Sigmoid colon (tissue), 7 donors: ENCODE measurements at regions of chr6 and their contacts with region 1.

Region 1: DNA sequence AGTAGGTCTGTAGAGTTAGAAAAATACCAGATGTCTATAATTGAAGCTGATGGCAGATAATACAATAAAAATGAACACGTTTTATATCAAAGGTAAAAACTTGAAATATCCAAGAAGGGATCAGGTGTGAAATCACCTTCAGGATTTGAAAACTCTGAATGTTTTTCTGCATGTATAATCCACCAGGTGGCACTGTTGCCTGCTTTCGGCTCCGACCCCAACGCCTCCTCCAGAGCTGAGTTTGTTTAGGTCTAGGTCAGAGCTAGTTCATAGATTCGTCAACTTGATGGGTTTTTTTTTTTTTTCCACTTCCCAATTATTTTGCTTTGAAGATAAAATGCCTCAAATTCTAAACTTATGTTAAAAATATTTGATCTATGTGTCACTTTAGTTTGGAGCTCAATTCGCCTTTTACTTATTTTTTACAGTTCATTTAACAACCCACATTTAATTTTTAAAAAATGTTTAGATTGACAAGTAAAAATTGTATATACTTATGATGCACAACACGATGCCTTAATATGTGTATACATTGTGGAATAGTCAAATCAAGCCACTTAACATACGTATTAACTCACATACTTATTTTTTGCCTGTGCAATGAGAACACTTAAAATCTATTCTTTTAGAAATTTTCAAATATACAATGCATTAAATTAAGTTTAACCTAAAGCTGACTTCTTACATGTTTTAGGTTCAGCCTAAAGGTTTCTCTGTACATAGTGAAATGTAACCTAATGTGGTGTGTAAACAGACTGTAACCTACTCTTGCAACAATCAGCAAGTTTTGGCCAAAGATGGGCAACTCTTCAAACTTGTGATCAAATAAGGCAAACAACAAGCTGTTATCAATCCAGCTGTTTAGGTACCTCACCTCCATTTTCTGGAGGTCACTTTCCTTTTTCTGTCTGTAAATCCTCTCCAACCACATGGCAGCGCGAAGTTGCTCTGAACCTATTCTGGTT is 39.4 kb upstream of the ENPP4 start:
- DNase-seq: peak; percentile 76
- H3K4me3 ChIP-seq: no peak overlapping the region
- H3K27ac ChIP-seq: no peak overlapping the region
- H3K4me1 ChIP-seq: no peaks in the 10 kb centered on the region
- H3K27me3 ChIP-seq: peaks cover 0 to 3% (median 0%) of the 10 kb centered on the region in 3 donors
- CTCF ChIP-seq: peak; percentile 11 to 75 (median 60)
- EP300 ChIP-seq: no peak
- POLR2A ChIP-seq: no peak

Region 2: DNA sequence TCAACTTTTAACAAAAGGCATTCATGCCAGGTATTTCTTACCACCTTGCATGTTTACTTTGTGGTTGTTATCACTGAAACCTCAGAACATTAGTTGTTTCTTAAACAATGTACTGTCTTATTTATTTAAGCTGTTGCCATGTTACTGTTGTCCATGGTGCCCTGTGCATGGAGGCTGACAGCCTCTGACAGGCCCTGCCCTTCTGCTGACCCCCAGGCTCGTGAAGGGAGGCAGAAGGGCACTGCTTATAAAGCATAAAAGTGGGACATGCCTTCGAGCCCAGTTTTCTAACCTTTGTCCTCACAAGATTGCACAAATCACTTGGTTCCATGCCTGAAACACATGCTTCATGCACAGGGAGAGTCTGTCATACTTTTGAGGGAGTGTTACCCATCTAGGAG is 28.1 kb before region 1 on chr6:
- intact Hi-C with region 1: no loop called
- DNase-seq: no peak
- H3K4me3 ChIP-seq: no peak overlapping the region
- H3K27ac ChIP-seq: no peak overlapping the region
- H3K4me1 ChIP-seq: no peaks in the 10 kb centered on the region
- H3K27me3 ChIP-seq: no peaks in the 10 kb centered on the region
- CTCF ChIP-seq: no peak
- EP300 ChIP-seq: no peak
- POLR2A ChIP-seq: no peak

Region 3: DNA sequence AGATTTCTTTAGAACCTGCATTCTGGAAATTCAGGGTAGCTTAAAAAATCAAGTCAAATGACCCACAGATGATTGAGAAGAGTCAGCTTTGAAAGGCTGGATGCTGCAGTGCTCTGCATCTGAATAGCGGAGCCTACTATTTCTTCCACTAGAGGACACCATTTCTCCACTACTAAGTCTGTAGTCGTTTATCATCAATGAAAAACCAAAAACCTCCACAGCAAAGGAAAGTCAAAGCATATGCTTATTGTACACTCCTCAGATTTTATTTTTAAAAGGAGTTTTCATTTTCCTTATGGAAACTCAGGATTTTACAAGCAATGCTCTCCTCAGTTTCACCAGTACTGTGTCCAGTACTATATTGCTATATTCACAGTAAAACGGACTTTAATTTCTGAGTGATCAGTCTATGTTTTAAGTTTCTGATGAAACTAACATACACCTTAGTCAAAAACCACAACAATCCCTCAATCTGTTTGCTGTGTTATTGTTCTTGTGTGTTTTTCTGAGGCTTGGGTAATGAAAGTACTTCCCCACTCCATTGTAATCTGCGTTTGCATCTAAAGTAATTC is 130.9 kb after region 1 on chr6:
- intact Hi-C with region 1: loop called (anchors 5 kb)
- DNase-seq: no peak
- H3K4me3 ChIP-seq: no peak overlapping the region
- H3K27ac ChIP-seq: no peak overlapping the region
- H3K4me1 ChIP-seq: no peaks in the 10 kb centered on the region
- H3K27me3 ChIP-seq: no peaks in the 10 kb centered on the region
- CTCF ChIP-seq: peak; percentile 41 to 74 (median 70)
- EP300 ChIP-seq: no peak
- POLR2A ChIP-seq: no peak

Region 4: DNA sequence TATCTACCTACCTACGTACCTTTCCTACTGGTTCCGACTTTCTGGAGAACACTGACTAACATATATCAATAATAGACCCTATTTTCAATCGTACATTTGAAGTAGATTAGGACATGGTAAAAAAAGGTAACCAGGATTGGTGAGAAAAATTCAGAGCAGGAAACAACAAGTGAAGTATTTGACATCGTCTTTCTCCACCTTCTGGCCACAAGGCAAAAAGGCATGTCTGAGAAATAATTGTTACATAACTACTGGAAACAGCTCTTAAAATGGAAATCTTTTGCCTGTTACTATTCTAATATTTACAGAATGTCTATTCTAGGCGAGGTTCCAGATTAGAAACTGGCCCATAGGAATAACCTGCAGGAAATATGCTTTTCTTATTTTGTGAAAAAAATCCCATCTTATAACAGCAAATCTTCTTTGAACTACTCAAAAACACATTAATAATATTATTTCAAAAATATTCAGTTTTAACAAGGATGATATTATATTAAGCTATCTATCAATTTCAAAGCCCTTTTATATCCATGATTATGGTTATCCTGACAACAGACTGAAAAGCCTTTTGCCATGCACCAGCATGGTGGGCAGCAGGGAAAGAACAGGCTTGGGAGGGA is 320.0 kb after region 1 on chr6:
- intact Hi-C with region 1: loop called (anchors 2 kb)
- DNase-seq: no peak
- H3K4me3 ChIP-seq: no peak overlapping the region
- H3K27ac ChIP-seq: no peak overlapping the region
- H3K4me1 ChIP-seq: peaks cover 0 to 16% (median 8%) of the 10 kb centered on the region in 4 donors
- H3K27me3 ChIP-seq: no peaks in the 10 kb centered on the region
- CTCF ChIP-seq: peak; percentile 46 to 88 (median 68)
- EP300 ChIP-seq: no peak
- POLR2A ChIP-seq: no peak

Region 5: DNA sequence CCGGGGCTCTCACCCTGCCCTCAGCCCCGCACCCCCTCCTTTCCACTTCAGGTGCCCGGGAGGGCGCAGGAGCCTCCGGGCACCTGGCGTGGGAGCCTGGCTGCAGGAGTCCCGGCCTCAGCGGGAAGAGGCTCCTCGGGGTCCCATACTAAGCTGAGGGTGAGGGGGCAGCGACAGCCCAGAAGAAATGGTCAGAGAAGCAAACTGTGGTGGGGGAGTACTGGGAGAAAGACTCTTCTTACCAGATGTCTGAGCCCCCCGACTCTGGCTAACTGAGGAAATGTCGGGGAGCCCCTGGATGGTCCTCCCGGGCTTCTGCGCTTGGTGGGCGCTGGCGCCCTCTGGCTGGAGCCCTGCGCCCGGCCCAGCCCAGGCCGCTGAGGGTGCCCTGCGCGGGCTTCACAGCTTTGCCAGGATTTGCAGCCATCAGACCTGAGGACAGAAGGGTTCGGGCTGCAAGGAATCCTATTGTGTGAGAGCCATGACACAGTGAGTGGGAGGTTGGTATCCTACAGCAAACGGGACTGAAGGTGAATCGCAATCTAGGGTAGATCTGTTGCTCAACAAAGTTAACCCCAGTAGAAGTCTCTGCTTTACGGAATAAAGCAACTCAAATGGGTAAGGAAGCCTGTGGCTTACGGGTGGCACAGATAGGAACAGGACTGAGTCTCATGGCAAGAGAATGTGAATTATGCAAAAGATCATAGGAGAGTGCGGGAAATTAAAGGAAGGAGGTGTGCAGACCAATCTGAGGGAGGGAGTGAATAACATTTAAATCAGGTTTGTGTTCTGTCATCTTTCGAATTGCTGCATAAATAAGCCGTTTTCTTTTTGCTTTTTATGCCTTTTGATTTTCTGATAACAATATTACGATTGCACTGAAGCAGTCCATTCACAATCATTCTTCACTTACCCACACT is 401.5 kb after region 1 on chr6:
- intact Hi-C with region 1: loop called (anchors 5 kb)
- DNase-seq: no peak
- H3K4me3 ChIP-seq: peak overlapping the region; percentile 46 to 77 (median 63)
- H3K27ac ChIP-seq: peak overlapping the region; percentile 57 to 81 (median 60)
- H3K4me1 ChIP-seq: peaks cover 0 to 24% (median 14%) of the 10 kb centered on the region in 4 donors
- H3K27me3 ChIP-seq: peaks cover 0 to 13% (median 7%) of the 10 kb centered on the region in 3 donors
- CTCF ChIP-seq: peak in 3 of 4 experiments; percentile 17 to 55 (median 44)
- EP300 ChIP-seq: no peak
- POLR2A ChIP-seq: no peak

Region 6: GRCh38 chr6:46626228-46626909 is 536.0 kb after region 1 on chr6:
- intact Hi-C with region 1: loop called (anchors 10 kb)
- DNase-seq: no peak
- H3K4me3 ChIP-seq: no peak overlapping the region
- H3K27ac ChIP-seq: no peak overlapping the region
- H3K4me1 ChIP-seq: no peaks in the 10 kb centered on the region
- H3K27me3 ChIP-seq: no peaks in the 10 kb centered on the region
- CTCF ChIP-seq: peak in 3 of 4 experiments; percentile 48 to 60 (median 55)
- EP300 ChIP-seq: no peak
- POLR2A ChIP-seq: no peak